Astrocyte of the cerebellum (primary cell): ENCODE measurements at regions of chr19 and their contacts with region 1.

Region 1: DNA sequence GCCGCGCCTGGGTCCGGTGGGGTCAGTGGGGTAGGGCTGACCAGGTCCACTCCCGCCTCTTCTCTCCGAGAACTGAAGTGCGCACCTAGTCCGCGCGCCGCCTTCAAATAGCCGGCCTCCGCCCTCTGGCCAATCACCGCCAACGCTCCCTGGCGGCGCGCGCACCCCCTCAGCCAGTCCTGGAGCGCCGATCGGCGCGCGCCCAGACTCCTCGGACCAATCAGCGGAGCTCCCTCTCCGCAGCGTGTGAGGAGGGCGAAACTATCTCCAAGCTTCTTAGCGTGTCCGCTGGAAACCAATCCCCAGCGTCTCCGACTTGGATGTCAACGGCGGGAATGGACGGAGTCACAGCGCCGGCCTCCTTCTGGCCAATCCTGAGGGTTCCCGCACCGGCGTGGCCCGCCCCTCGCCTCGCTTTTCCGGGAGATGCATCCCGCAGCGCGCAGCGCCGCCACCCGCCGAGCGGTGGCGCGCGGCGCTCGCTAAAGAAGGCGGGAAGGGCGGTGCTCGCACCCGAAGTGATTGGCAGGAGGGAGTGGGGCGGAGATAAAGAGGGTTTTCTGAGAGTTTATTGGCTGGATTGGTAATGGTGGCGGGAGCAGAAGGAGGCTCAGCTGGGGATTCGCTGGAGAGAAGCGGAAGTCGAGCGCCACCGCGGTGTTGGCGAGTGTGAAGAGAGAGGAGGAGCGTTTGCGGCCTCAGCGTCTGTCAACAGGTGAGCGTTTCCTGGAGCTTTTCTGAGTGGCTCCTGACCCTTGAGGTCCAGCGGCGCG is at the start of gene ASF1B:
- DNase-seq: peak; percentile 100
- H3K4me3 ChIP-seq: peak within 1 kb of the TSS; percentile 80
- CTCF ChIP-seq: peak; percentile 62

Region 2: GRCh38 chr19:14078411-14078810 is 58.3 kb before region 1 on chr19:
- in situ Hi-C with region 1: loop called (anchors 5 kb)
- DNase-seq: no peak
- H3K4me3 ChIP-seq: no peak overlapping the region
- CTCF ChIP-seq: no peak

Region 3: GRCh38 chr19:14413693-14414181 is 277.0 kb after region 1 on chr19:
- in situ Hi-C with region 1: loop called (anchors 5 kb)
- DNase-seq: peak; percentile 59
- H3K4me3 ChIP-seq: no peak overlapping the region
- CTCF ChIP-seq: no peak